Heart left ventricle (tissue), 16 donors: ENCODE measurements at regions of chr15 and their contacts with region 1.

Region 1: GRCh38 chr15:81901319-81901718 is 144.5 kb downstream of the MEX3B start:
- DNase-seq: no peak
- ATAC-seq: no peak
- H3K4me3 ChIP-seq: no peak overlapping the region
- H3K27ac ChIP-seq: no peak overlapping the region
- H3K4me1 ChIP-seq: no peaks in the 10 kb centered on the region
- H3K27me3 ChIP-seq: peaks cover 0 to 3% (median 0%) of the 10 kb centered on the region in 9 donors
- CTCF ChIP-seq: no peak
- POLR2A ChIP-seq: no peak

Region 2: GRCh38 chr15:81480645-81481053 is 420.7 kb before region 1 on chr15:
- intact Hi-C with region 1: no loop called
- DNase-seq: peak in 3 of 5 donors; percentile 23 to 32 (median 26)
- ATAC-seq: peak; percentile 42 to 65 (median 62)
- H3K4me3 ChIP-seq: peak overlapping the region in 1 of 12 donors; percentile 7
- H3K27ac ChIP-seq: no peak overlapping the region
- H3K4me1 ChIP-seq: no peaks in the 10 kb centered on the region
- H3K27me3 ChIP-seq: no peaks in the 10 kb centered on the region
- CTCF ChIP-seq: peak; percentile 79 to 99 (median 87)
- POLR2A ChIP-seq: no peak

Region 3: DNA sequence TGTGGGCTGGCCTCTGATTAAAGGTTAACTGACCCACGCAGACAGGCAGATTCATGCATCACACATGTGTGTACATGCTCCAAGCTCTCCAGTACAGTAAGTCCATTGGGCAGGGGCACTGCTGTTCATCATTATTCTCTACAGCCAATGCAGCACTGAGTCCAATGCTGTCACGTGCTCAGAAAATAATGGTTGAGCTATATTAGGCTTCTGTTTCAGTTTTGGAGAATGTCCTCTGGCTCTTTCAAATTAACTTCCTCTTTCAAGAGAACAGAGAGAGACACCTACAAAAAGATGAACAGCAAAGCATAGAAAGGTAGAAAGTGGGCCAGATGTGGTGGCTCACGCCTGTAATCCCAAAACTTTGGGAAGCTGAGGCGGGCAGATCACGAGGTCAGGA is 58.1 kb before region 1 on chr15:
- intact Hi-C with region 1: loop called in 1 of 10 experiments (anchors 10 kb)
- DNase-seq: no peak
- ATAC-seq: no peak
- H3K4me3 ChIP-seq: no peak overlapping the region
- H3K27ac ChIP-seq: no peak overlapping the region
- H3K4me1 ChIP-seq: no peaks in the 10 kb centered on the region
- H3K27me3 ChIP-seq: no peaks in the 10 kb centered on the region
- CTCF ChIP-seq: no peak
- POLR2A ChIP-seq: no peak

Region 4: GRCh38 chr15:81966631-81967030 is 65.3 kb after region 1 on chr15:
- intact Hi-C with region 1: no loop called
- DNase-seq: no peak
- ATAC-seq: no peak
- H3K4me3 ChIP-seq: no peak overlapping the region
- H3K27ac ChIP-seq: no peak overlapping the region
- H3K4me1 ChIP-seq: no peaks in the 10 kb centered on the region
- H3K27me3 ChIP-seq: no peaks in the 10 kb centered on the region
- CTCF ChIP-seq: no peak
- POLR2A ChIP-seq: no peak